CD4-positive, alpha-beta memory T cell (primary cell): ENCODE measurements at regions of chr9 and their contacts with region 1.

Region 1: DNA sequence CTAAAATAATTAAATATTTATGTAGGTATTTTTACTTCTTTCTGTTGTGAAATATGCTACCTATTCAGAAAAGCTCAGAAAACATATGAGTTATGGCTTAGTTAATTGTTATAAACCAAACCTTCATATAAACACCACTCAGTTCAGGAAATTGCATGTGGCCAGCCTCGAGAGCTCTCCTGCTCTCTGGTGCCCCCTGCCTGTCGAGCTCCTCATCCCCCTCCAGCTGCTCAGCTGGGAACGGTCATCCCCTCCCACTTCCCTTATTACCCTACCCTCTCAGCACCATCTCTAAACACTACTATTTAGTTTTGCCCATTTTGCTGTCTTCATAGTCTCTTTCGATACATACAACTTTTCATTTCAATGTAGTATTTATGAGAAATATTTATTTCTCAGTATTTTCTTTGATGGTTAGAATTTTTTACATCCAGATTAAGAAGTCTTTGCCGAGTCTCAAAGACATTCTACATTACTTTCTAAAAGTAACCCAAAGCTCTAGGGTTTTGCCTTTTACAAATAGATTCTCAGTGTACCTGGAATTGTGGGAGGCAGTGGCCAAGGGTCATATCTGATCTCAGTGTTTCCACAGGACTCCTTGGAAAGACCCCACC is 51.2 kb upstream of the SEMA4D start:
- DNase-seq: peak; percentile 78 to 83 (median 79)
- H3K4me3 ChIP-seq: no peak overlapping the region
- H3K4me3 Mint-ChIP-seq: peak overlapping the region in 4 of 8 donors; percentile 7 to 52 (median 44)
- H3K27ac ChIP-seq: no peak overlapping the region
- H3K27ac Mint-ChIP-seq: peak overlapping the region in 4 of 7 donors; percentile 50 to 79 (median 60)
- H3K4me1 ChIP-seq: peaks cover 18% of the 10 kb centered on the region
- H3K4me1 Mint-ChIP-seq: peaks cover 7 to 20% (median 14%) of the 10 kb centered on the region in 4 donors
- H3K27me3 ChIP-seq: no peaks in the 10 kb centered on the region
- H3K27me3 Mint-ChIP-seq: peaks cover 0 to 1% of the 10 kb centered on the region in 2 donors

Region 2: DNA sequence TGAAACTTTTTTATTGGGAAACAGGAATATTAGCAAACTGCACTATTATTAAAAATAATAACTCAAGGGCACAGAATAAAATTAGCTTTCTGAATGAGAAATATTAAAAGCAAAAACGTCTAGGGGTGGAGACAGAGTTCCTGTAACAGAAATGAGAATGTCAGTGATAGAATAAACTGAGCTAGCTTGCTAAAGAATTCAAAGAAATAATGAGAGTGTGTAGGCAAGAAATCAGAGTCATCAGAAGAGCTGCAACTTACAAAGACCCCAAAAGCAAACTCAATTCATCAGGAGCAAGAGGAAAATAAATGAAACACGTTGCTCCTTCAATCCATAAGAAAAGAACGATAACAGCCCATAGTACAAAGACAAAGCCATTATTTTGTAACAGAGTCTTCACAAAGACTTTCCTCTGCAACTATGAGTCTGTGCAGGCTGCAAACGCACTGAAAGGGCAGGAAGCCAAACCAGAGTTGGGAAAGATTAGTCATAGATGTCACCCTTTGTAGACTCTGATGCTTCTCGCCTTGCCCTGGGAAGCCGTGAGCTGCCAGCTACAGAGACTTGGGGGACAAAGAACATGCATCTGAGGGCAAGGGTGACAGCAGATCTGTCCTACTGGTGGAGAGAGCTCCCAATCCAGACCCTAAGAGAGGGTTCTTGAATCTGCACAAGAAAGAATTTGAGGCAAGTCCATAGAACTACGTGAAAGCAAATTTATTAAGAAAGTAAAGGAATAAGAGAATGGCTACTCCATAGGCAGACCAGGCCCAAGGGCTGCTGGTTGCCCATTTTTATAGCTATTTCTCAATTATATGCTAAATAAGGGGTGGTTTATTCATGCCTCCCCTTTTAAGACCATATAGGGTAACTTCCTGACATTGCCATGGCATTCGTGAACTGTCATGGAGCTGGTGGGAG is 411.3 kb before region 1 on chr9:
- CTCF ChIA-PET with region 1: no interaction called
- POLR2A ChIA-PET with region 1: no interaction called
- intact Hi-C with region 1: no loop called
- DNase-seq: no peak
- H3K4me3 ChIP-seq: no peak overlapping the region
- H3K4me3 Mint-ChIP-seq: no peak overlapping the region
- H3K27ac ChIP-seq: no peak overlapping the region
- H3K27ac Mint-ChIP-seq: no peak overlapping the region
- H3K4me1 ChIP-seq: no peaks in the 10 kb centered on the region
- H3K4me1 Mint-ChIP-seq: no peaks in the 10 kb centered on the region
- H3K27me3 ChIP-seq: no peaks in the 10 kb centered on the region
- H3K27me3 Mint-ChIP-seq: peaks cover 0 to 16% of the 10 kb centered on the region in 2 donors

Region 3: GRCh38 chr9:89347651-89348050 is 201.5 kb before region 1 on chr9:
- CTCF ChIA-PET with region 1: interaction called, 11 read pairs
- POLR2A ChIA-PET with region 1: no interaction called
- intact Hi-C with region 1: no loop called
- DNase-seq: no peak
- H3K4me3 ChIP-seq: no peak overlapping the region
- H3K4me3 Mint-ChIP-seq: no peak overlapping the region
- H3K27ac ChIP-seq: no peak overlapping the region
- H3K27ac Mint-ChIP-seq: peak overlapping the region in 2 of 7 donors; percentile 4 to 19
- H3K4me1 ChIP-seq: peaks cover 15% of the 10 kb centered on the region
- H3K4me1 Mint-ChIP-seq: peaks cover 28 to 46% (median 32%) of the 10 kb centered on the region in 4 donors
- H3K27me3 ChIP-seq: no peaks in the 10 kb centered on the region
- H3K27me3 Mint-ChIP-seq: no peaks in the 10 kb centered on the region

Region 4: GRCh38 chr9:89428901-89429890 is 119.9 kb before region 1 on chr9:
- CTCF ChIA-PET with region 1: interaction called, 166 read pairs
- POLR2A ChIA-PET with region 1: interaction called, 20 read pairs
- intact Hi-C with region 1: loop called (anchors 1 kb)
- DNase-seq: peak; percentile 66 to 86 (median 73)
- H3K4me3 ChIP-seq: no peak overlapping the region
- H3K4me3 Mint-ChIP-seq: peak overlapping the region in 5 of 8 donors; percentile 17 to 73 (median 53)
- H3K27ac ChIP-seq: peak overlapping the region; percentile 4
- H3K27ac Mint-ChIP-seq: peak overlapping the region; percentile 50 to 97 (median 86)
- H3K4me1 ChIP-seq: peaks cover 100% of the 10 kb centered on the region
- H3K4me1 Mint-ChIP-seq: peaks cover 62 to 100% (median 85%) of the 10 kb centered on the region in 4 donors
- H3K27me3 ChIP-seq: no peaks in the 10 kb centered on the region
- H3K27me3 Mint-ChIP-seq: no peaks in the 10 kb centered on the region

Region 5: GRCh38 chr9:89461265-89461664 is 87.9 kb before region 1 on chr9:
- CTCF ChIA-PET with region 1: interaction called, 29 read pairs
- POLR2A ChIA-PET with region 1: interaction called, 11 read pairs
- intact Hi-C with region 1: loop called (anchors 1 kb)
- DNase-seq: peak in 1 of 5 donors; percentile 70
- H3K4me3 ChIP-seq: no peak overlapping the region
- H3K4me3 Mint-ChIP-seq: peak overlapping the region in 7 of 8 donors; percentile 36 to 80 (median 65)
- H3K27ac ChIP-seq: peak overlapping the region; percentile 45
- H3K27ac Mint-ChIP-seq: peak overlapping the region; percentile 78 to 98 (median 92)
- H3K4me1 ChIP-seq: peaks cover 100% of the 10 kb centered on the region
- H3K4me1 Mint-ChIP-seq: peaks cover 81 to 100% (median 95%) of the 10 kb centered on the region in 4 donors
- H3K27me3 ChIP-seq: no peaks in the 10 kb centered on the region
- H3K27me3 Mint-ChIP-seq: no peaks in the 10 kb centered on the region

Region 6: DNA sequence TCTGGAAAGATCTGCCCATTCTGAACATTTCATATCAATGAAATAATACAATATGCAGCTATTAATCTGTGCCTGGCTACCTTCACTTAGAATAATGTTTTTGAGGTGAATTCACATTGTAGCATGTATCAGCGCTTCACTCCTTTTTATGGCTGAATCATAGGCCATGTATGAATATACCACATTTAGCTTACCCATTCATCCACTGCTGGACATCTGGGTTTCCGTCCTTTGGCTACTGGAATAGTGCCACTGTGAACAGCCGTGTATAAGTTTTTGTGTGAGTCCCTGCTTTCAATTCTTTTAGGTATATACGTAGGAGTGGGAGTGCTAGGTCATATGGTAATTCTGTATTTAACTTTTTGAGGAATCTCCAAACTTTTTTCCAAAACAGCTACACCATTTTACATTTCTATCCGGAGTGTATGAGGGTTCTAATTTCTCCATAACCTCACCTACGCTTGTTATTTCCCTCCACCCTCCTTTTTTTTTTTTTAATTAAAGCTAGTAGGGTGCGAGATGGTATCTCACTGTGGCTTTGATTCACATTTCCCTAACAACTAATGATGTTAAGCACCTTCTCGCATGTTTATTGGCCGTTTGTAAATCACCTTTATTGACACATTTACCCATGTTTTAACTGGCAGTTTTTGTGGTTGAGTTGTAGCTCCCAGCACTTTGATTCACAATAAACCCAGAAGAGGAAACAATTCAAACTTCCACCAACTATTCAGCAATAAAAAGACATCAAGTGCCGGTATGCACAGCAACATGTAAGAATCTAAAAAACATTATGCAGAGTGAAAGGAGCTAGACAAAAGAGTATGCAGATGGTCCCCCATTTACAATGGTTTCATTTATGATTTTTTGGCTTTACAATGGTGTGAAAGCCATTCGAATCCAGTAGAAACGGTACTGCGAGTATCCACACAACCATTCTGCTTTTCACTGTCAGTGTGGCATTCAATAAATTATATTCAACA is 59.3 kb before region 1 on chr9:
- CTCF ChIA-PET with region 1: interaction called, 52 read pairs
- POLR2A ChIA-PET with region 1: interaction called, 11 read pairs
- intact Hi-C with region 1: no loop called
- DNase-seq: peak; percentile 71 to 86 (median 83)
- H3K4me3 ChIP-seq: peak overlapping the region; percentile 19 to 20
- H3K4me3 Mint-ChIP-seq: peak overlapping the region; percentile 68 to 100 (median 92)
- H3K27ac ChIP-seq: peak overlapping the region; percentile 72
- H3K27ac Mint-ChIP-seq: peak overlapping the region; percentile 74 to 99 (median 88)
- H3K4me1 ChIP-seq: peaks cover 97% of the 10 kb centered on the region
- H3K4me1 Mint-ChIP-seq: peaks cover 87 to 100% (median 93%) of the 10 kb centered on the region in 4 donors
- H3K27me3 ChIP-seq: no peaks in the 10 kb centered on the region
- H3K27me3 Mint-ChIP-seq: no peaks in the 10 kb centered on the region

Region 7: DNA sequence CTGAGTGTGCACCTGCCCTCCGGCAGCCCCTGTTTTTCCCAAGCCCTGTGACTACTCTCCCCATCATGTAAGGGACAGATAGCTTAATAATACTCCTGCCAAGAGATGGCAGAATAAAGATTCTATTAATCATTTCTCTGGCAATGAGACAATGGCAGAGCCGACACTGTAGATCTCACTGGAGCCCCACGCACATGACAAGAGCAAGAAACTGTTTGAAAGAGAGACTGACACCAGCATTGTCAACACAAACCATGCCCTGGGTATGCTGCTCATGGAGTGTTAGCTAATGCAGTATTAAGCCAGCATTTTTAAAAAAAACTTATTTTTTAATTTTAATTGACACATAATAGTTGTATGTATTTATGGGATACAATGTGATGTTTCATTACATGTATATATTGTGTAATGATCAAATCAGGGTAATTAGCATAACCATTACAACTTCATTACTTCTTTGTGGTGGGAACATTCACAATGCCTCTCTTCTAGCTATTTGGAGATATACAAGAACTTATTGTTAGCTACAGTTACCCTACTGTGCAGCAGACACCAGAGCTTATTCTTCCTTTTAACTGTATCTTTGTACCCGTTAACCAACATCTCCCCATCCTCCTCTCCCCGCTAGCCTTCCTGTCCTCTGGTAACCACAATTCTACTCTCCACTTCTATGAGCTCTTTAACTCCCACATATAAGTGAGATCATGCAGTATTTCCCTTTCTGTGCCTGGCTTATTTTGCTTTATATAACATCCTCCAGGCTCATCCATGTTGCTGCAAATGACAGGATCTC is 19.7 kb before region 1 on chr9:
- CTCF ChIA-PET with region 1: interaction called, 80 read pairs
- POLR2A ChIA-PET with region 1: interaction called, 11 read pairs
- intact Hi-C with region 1: no loop called
- DNase-seq: peak; percentile 36 to 56 (median 40)
- H3K4me3 ChIP-seq: no peak overlapping the region
- H3K4me3 Mint-ChIP-seq: peak overlapping the region; percentile 15 to 89 (median 66)
- H3K27ac ChIP-seq: no peak overlapping the region
- H3K27ac Mint-ChIP-seq: peak overlapping the region; percentile 39 to 92 (median 76)
- H3K4me1 ChIP-seq: peaks cover 98% of the 10 kb centered on the region
- H3K4me1 Mint-ChIP-seq: peaks cover 74 to 100% (median 91%) of the 10 kb centered on the region in 4 donors
- H3K27me3 ChIP-seq: no peaks in the 10 kb centered on the region
- H3K27me3 Mint-ChIP-seq: no peaks in the 10 kb centered on the region